ENCODE measurements at regions of chr2 and their contacts with region 1.

Region 1: DNA sequence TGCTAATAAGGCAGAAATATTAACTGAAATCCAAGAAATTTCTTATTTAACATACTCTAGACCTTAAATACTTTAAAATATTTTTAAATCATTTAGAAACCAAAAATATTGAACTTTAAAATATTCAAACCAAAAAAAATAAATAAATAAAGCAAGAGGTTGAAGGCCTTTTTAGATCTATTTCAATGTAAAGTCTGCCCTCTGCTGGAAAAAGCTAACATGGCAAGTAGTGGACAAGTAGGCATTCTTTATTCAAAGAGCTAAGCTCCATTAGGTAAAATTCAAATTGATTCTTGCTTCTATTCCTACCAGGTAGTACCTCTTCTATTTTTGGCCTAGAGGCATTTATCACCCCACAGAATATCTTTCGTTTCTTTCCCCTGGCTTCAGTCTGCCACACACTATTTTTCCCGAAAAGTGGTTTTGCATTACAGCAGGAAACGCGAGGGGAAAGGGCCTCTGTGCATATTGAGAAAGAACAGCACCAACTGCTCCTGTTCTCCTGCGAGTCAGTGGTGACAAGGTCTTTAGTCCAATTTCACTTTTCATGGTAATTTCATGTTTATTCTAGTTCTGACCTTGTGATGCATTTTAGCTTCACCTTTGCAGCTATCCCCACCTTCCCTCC is 20.4 kb downstream of the IFIH1 start:
- DNase-seq: peak; percentile 28 to 75 (median 38)
- ATAC-seq: peak; percentile 82
- H3K4me3 ChIP-seq: no peak overlapping the region
- H3K27ac ChIP-seq: no peak overlapping the region
- H3K4me1 ChIP-seq: no peaks in the 10 kb centered on the region
- H3K27me3 ChIP-seq: no peaks in the 10 kb centered on the region
- CTCF ChIP-seq: peak; percentile 35 to 79 (median 58); a peak in 5 of 6 replicates
- EP300 ChIP-seq: no peak
- POLR2A ChIP-seq: no peak
- RAD21 ChIP-seq: peak; percentile 81 to 82

Region 2: GRCh38 chr2:161586517-161587167 is 711.4 kb before region 1 on chr2:
- CTCF ChIA-PET with region 1: no interaction called
- POLR2A ChIA-PET with region 1: no interaction called
- in situ Hi-C with region 1: no loop called
- intact Hi-C with region 1: loop called (anchors 2 kb)
- DNase-seq: peak; percentile 16 to 20 (median 18)
- ATAC-seq: peak; percentile 50; the same call in 2 of the 3 replicates
- H3K4me3 ChIP-seq: no peak overlapping the region
- H3K27ac ChIP-seq: no peak overlapping the region
- H3K4me1 ChIP-seq: no peaks in the 10 kb centered on the region
- H3K27me3 ChIP-seq: no peaks in the 10 kb centered on the region
- CTCF ChIP-seq: peak; percentile 35 to 57 (median 46); a peak in 5 of 6 replicates
- EP300 ChIP-seq: no peak
- POLR2A ChIP-seq: no peak
- RAD21 ChIP-seq: peak; percentile 47 to 70

Region 3: GRCh38 chr2:162007447-162008040 is 290.5 kb before region 1 on chr2:
- CTCF ChIA-PET with region 1: no interaction called
- POLR2A ChIA-PET with region 1: no interaction called
- in situ Hi-C with region 1: no loop called
- intact Hi-C with region 1: loop called (anchors 5 kb)
- DNase-seq: peak in 1 of 4 experiments; percentile 9
- ATAC-seq: no peak
- H3K4me3 ChIP-seq: no peak overlapping the region
- H3K27ac ChIP-seq: no peak overlapping the region
- H3K4me1 ChIP-seq: no peaks in the 10 kb centered on the region
- H3K27me3 ChIP-seq: no peaks in the 10 kb centered on the region
- CTCF ChIP-seq: peak in 1 of 3 experiments; percentile 63; a peak in 3 of 6 replicates
- EP300 ChIP-seq: no peak
- POLR2A ChIP-seq: no peak
- RAD21 ChIP-seq: no peak; a peak in 1 of 4 replicates

Region 4: GRCh38 chr2:162153608-162154224 is 144.3 kb before region 1 on chr2:
- CTCF ChIA-PET with region 1: interaction called, 3 read pairs
- POLR2A ChIA-PET with region 1: no interaction called
- in situ Hi-C with region 1: no loop called
- intact Hi-C with region 1: loop called (anchors 2 kb)
- DNase-seq: peak in 3 of 4 experiments; percentile 12 to 44 (median 15)
- ATAC-seq: peak; percentile 61; the same call in 1 of the 3 replicates
- H3K4me3 ChIP-seq: no peak overlapping the region
- H3K27ac ChIP-seq: no peak overlapping the region
- H3K4me1 ChIP-seq: no peaks in the 10 kb centered on the region
- H3K27me3 ChIP-seq: no peaks in the 10 kb centered on the region
- CTCF ChIP-seq: peak in 2 of 3 experiments; percentile 41 to 44; a peak in 3 of 6 replicates
- EP300 ChIP-seq: no peak
- POLR2A ChIP-seq: no peak
- RAD21 ChIP-seq: peak; percentile 7 to 42; a peak in 2 of 4 replicates

Region 5: DNA sequence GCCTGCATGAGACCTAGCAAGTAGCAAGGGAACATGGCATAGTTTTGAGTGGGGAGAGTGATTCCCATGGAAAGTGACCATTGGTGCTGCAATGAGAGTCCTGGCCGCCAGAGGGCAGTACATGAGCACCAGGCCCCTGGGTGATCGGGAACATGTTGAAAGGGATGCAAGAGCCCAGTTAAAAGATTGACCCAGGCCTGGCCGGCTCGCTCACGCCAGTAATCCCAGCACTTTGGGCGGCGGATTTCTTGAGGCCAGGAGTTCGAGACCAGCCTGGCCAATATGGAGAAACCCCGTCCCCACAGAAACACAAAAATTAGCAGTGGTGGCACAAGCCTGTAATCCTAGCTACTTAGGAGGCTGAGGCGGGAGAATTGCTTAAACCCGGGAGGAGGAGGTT is 77.0 kb before region 1 on chr2:
- CTCF ChIA-PET with region 1: interaction called, 7 read pairs
- POLR2A ChIA-PET with region 1: no interaction called
- in situ Hi-C with region 1: no loop called
- intact Hi-C with region 1: loop called (anchors 2 kb)
- DNase-seq: peak; percentile 35 to 62 (median 52)
- ATAC-seq: peak; percentile 70; the same call in 2 of the 3 replicates
- H3K4me3 ChIP-seq: no peak overlapping the region
- H3K27ac ChIP-seq: no peak overlapping the region
- H3K4me1 ChIP-seq: no peaks in the 10 kb centered on the region
- H3K27me3 ChIP-seq: no peaks in the 10 kb centered on the region
- CTCF ChIP-seq: peak; percentile 59 to 71 (median 62)
- EP300 ChIP-seq: no peak
- POLR2A ChIP-seq: no peak
- RAD21 ChIP-seq: peak; percentile 65 to 79

Measured in K562 (cell line).